Ovary (tissue), 10 donors: ENCODE measurements at regions of chr7 and their contacts with region 1.

Region 1: GRCh38 chr7:142012825-142013511 is 17.3 kb downstream of the MGAM start:
- DNase-seq: no peak
- H3K4me3 ChIP-seq: no peak overlapping the region
- H3K27ac ChIP-seq: no peak overlapping the region
- H3K4me1 ChIP-seq: no peaks in the 10 kb centered on the region
- H3K27me3 ChIP-seq: no peaks in the 10 kb centered on the region
- CTCF ChIP-seq: no peak
- EP300 ChIP-seq: no peak
- POLR2A ChIP-seq: no peak

Region 2: DNA sequence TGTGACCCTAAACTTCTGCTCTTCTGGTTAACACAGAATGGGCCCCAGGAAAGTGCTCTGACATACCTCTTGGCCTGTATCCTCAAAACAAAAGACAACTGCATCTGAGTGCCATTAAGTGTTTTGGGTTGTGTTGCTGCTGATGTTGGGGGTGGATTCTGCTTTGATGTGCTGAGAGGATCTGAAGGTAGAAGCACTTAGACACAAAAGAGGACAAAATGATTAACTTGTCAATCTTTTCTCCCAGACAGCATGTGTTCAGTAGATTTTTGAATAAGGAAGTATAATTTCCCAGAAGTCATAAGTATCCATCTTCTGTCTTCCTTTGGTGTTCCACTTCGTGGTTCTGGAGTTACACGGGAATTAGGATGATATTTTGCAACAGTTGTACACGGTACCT is 955.2 kb before region 1 on chr7:
- intact Hi-C with region 1: no loop called
- DNase-seq: no peak
- H3K4me3 ChIP-seq: no peak overlapping the region
- H3K27ac ChIP-seq: no peak overlapping the region
- H3K4me1 ChIP-seq: no peaks in the 10 kb centered on the region
- H3K27me3 ChIP-seq: no peaks in the 10 kb centered on the region
- CTCF ChIP-seq: no peak
- EP300 ChIP-seq: no peak
- POLR2A ChIP-seq: no peak

Region 3: GRCh38 chr7:142104550-142105527 is 91.9 kb after region 1 on chr7:
- intact Hi-C with region 1: loop called in 1 of 4 experiments (anchors 5 kb)
- DNase-seq: no peak
- H3K4me3 ChIP-seq: no peak overlapping the region
- H3K27ac ChIP-seq: no peak overlapping the region
- H3K4me1 ChIP-seq: no peaks in the 10 kb centered on the region
- H3K27me3 ChIP-seq: no peaks in the 10 kb centered on the region
- CTCF ChIP-seq: no peak
- EP300 ChIP-seq: no peak
- POLR2A ChIP-seq: no peak